ENCODE measurements at regions of chr19 and their contacts with region 1.

Region 1: GRCh38 chr19:3163230-3163886 is 15.2 kb upstream of the S1PR4 start:
- DNase-seq: peak; percentile 76
- H3K4me3 Mint-ChIP-seq: no peak overlapping the region
- H3K27ac Mint-ChIP-seq: peak overlapping the region; percentile 73
- H3K4me1 Mint-ChIP-seq: peaks cover 61% of the 10 kb centered on the region
- H3K27me3 Mint-ChIP-seq: no peaks in the 10 kb centered on the region

Region 2: DNA sequence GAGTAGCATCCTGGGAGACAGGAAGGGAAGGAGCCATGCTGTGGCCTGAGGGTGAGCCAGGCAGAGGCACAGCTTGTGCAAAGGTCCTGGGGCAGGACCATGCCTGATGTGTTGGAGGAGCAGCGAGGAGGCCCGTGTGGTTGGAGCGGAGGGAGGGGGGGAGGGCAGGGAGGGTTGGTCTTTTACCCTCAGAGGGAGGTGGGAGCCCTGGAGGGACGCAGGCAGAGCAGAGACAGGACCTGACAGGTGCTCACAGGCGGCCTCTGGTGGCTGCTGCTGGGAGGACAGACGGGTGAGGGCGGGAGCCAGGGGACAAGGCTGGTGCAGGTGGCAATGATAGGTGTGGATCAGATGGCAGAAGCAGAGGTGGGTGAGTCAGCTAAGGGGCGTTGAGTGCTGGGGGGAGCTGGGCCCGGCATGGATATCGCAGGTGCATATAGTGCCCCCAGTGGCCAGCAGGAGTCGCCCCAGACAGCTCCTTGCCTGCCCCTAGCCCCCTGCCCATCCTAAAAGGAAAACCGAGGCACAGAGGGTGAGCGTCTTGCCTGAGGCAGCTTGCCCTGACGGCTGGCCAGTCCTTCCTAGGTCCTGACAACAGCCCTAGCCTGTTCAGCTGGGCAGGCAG is 37.3 kb before region 1 on chr19:
- CTCF ChIA-PET with region 1: interaction called, 46 read pairs
- POLR2A ChIA-PET with region 1: interaction called, 5 read pairs
- DNase-seq: peak; percentile 68
- H3K4me3 Mint-ChIP-seq: no peak overlapping the region
- H3K27ac Mint-ChIP-seq: no peak overlapping the region
- H3K4me1 Mint-ChIP-seq: peaks cover 21% of the 10 kb centered on the region
- H3K27me3 Mint-ChIP-seq: no peaks in the 10 kb centered on the region

Region 3: GRCh38 chr19:3132971-3133792 is 30.2 kb before region 1 on chr19:
- CTCF ChIA-PET with region 1: interaction called, 46 read pairs
- POLR2A ChIA-PET with region 1: interaction called, 6 read pairs
- DNase-seq: peak; percentile 92
- H3K4me3 Mint-ChIP-seq: peak overlapping the region; percentile 67
- H3K27ac Mint-ChIP-seq: peak overlapping the region; percentile 98
- H3K4me1 Mint-ChIP-seq: peaks cover 61% of the 10 kb centered on the region
- H3K27me3 Mint-ChIP-seq: no peaks in the 10 kb centered on the region

Region 4: DNA sequence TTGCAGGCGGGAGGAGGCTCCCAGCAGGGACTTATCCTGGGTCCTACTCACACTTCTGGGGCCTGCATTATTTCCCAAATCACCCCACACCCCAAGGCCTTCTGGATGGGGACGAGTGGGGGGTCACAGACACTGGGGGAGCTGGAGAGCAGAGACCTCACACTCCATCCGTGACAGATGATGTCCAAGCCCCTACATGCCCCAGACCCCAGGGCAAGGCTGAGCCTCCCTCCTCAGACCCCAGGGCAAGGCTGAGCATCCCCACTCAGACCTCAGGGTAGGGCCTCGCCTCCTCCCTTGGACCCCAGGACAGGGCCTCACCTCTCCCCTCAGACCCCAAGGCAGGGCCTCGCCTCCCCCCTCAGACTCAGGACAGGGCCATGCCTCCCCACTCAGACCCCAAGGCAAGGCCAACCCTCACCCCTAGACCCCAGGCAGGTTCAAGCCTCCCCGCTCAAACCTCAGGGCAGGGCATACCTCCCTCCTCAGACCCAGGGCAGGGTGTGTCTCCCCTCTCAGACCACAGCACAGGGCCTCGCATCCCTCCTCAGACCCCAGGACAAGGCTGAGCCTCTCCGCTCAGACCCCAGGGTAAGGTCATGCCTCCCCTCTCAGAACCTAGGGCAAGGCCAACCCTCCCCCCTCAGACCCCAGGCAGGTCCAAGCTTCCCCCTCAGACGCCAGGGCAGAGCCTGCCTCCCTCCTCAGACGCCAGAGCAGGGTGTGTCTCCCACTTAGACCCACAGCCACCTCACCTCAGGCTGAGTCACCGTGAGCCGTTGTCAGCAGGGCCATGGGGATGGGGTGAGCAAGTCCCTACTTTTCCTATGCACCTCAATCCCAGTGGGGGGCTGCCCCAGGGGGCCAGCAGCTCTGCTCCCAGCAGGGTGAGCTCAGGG is 13.5 kb after region 1 on chr19:
- CTCF ChIA-PET with region 1: interaction called, 3 read pairs
- POLR2A ChIA-PET with region 1: interaction called, 20 read pairs
- DNase-seq: peak; percentile 86
- H3K4me3 Mint-ChIP-seq: peak overlapping the region; percentile 76
- H3K27ac Mint-ChIP-seq: peak overlapping the region; percentile 94
- H3K4me1 Mint-ChIP-seq: peaks cover 26% of the 10 kb centered on the region
- H3K27me3 Mint-ChIP-seq: no peaks in the 10 kb centered on the region

Region 5: GRCh38 chr19:3243819-3244700 is 80.7 kb after region 1 on chr19:
- CTCF ChIA-PET with region 1: no interaction called
- POLR2A ChIA-PET with region 1: no interaction called
- DNase-seq: peak; percentile 60
- H3K4me3 Mint-ChIP-seq: no peak overlapping the region
- H3K27ac Mint-ChIP-seq: no peak overlapping the region
- H3K4me1 Mint-ChIP-seq: no peaks in the 10 kb centered on the region
- H3K27me3 Mint-ChIP-seq: no peaks in the 10 kb centered on the region

Measured in activated CD4-positive, alpha-beta memory T cell treated with anti-CD3 and anti-CD28 coated beads, Interleukin-2, amount 10 ng/mL, durations not matched to agents 7 days and 5 days (primary cell).